ENCODE measurements at regions of chr15 and their contacts with region 1.

Region 1: GRCh38 chr15:80058851-80059785 is at the start of gene ZFAND6:
- DNase-seq: peak; percentile 98
- ATAC-seq: peak; percentile 83
- H3K4me3 Mint-ChIP-seq: peak within 1 kb of the TSS; percentile 92
- H3K27ac Mint-ChIP-seq: peak within 1 kb of the TSS; percentile 92
- H3K4me1 Mint-ChIP-seq: peaks cover 51% of the 10 kb centered on the region
- H3K27me3 Mint-ChIP-seq: no peaks in the 10 kb centered on the region
- CTCF ChIP-seq: no peak
- total RNA-seq, gene ZFAND6: 95.5 and 101 TPM in 2 replicates

Region 2: GRCh38 chr15:79923515-79924395 is 135.4 kb before region 1 on chr15:
- CTCF ChIA-PET with region 1: no interaction called
- POLR2A ChIA-PET with region 1: interaction called, 17 read pairs
- intact Hi-C with region 1: loop called (anchors 1 kb)
- DNase-seq: peak; percentile 100
- ATAC-seq: peak; percentile 94
- H3K4me3 Mint-ChIP-seq: peak overlapping the region; percentile 93
- H3K27ac Mint-ChIP-seq: peak overlapping the region; percentile 94
- H3K4me1 Mint-ChIP-seq: peaks cover 26% of the 10 kb centered on the region
- H3K27me3 Mint-ChIP-seq: no peaks in the 10 kb centered on the region
- CTCF ChIP-seq: no peak

Region 3: GRCh38 chr15:79978655-79979514 is 80.2 kb before region 1 on chr15:
- CTCF ChIA-PET with region 1: no interaction called
- POLR2A ChIA-PET with region 1: interaction called, 7 read pairs
- intact Hi-C with region 1: loop called (anchors 1 kb)
- DNase-seq: peak; percentile 28
- ATAC-seq: peak; percentile 64
- H3K4me3 Mint-ChIP-seq: peak overlapping the region; percentile 83
- H3K27ac Mint-ChIP-seq: peak overlapping the region; percentile 94
- H3K4me1 Mint-ChIP-seq: peaks cover 78% of the 10 kb centered on the region
- H3K27me3 Mint-ChIP-seq: no peaks in the 10 kb centered on the region
- CTCF ChIP-seq: no peak

Region 4: DNA sequence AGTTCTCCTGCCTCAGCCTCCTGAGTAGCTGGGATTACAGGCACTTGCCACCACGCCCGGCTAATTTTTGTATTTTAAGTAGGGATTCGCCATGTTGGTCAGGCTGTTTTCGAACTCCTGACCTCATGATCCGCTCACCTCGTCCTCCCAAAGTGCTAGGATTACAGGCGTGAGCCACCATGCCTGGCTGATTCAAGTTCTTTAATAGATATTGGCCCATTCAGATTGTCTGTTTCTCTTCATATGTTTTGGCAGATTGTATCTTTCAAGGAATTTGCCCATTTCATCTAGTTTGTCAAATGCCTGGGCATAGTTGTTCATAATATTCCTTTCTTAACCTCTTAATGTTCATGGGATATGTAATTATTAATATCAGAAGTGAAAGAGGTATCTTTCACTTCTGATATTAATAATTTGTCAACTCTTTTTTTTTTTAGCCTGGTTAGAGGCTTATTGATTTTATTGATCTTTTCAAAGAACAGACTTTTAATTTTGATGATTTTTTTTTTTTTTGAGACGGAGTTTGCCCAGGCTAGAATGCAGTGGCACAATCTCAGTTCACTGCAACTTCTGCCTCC is 39.9 kb before region 1 on chr15:
- CTCF ChIA-PET with region 1: interaction called, 3 read pairs
- POLR2A ChIA-PET with region 1: interaction called, 34 read pairs
- intact Hi-C with region 1: loop called (anchors 1 kb)
- DNase-seq: no peak
- ATAC-seq: no peak
- H3K4me3 Mint-ChIP-seq: peak overlapping the region; percentile 87
- H3K27ac Mint-ChIP-seq: peak overlapping the region; percentile 98
- H3K4me1 Mint-ChIP-seq: peaks cover 73% of the 10 kb centered on the region
- H3K27me3 Mint-ChIP-seq: no peaks in the 10 kb centered on the region
- CTCF ChIP-seq: no peak

Region 5: GRCh38 chr15:80072285-80072994 is 13.3 kb after region 1 on chr15:
- CTCF ChIA-PET with region 1: no interaction called
- POLR2A ChIA-PET with region 1: interaction called, 19 read pairs
- intact Hi-C with region 1: loop called (anchors 1 kb)
- DNase-seq: no peak
- ATAC-seq: peak; percentile 89
- H3K4me3 Mint-ChIP-seq: peak overlapping the region; percentile 69
- H3K27ac Mint-ChIP-seq: peak overlapping the region; percentile 53
- H3K4me1 Mint-ChIP-seq: peaks cover 80% of the 10 kb centered on the region
- H3K27me3 Mint-ChIP-seq: no peaks in the 10 kb centered on the region
- CTCF ChIP-seq: no peak

Region 6: DNA sequence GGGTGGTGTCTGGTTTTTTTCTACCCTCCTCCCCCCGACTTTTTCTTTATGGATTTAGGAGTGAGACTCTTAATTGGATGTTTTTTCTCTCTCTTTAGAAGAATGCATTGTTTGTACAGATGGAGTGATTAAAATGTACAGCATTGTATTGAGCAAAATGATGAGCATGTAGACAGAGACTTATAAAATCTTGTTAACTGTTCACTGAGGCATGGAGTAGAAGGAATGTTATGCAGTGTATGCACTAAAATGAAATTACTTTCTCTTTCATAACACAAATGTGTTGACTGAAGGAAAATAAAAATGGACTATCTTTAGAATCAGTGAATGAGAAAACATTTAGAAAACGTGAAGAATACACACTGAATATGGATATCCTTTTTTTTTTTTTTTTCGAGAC is 40.1 kb after region 1 on chr15:
- CTCF ChIA-PET with region 1: no interaction called
- POLR2A ChIA-PET with region 1: no interaction called
- intact Hi-C with region 1: loop called (anchors 5 kb)
- DNase-seq: no peak
- ATAC-seq: peak; percentile 57
- H3K4me3 Mint-ChIP-seq: peak overlapping the region; percentile 45
- H3K27ac Mint-ChIP-seq: peak overlapping the region; percentile 51
- H3K4me1 Mint-ChIP-seq: peaks cover 56% of the 10 kb centered on the region
- H3K27me3 Mint-ChIP-seq: no peaks in the 10 kb centered on the region
- CTCF ChIP-seq: no peak

Region 7: DNA sequence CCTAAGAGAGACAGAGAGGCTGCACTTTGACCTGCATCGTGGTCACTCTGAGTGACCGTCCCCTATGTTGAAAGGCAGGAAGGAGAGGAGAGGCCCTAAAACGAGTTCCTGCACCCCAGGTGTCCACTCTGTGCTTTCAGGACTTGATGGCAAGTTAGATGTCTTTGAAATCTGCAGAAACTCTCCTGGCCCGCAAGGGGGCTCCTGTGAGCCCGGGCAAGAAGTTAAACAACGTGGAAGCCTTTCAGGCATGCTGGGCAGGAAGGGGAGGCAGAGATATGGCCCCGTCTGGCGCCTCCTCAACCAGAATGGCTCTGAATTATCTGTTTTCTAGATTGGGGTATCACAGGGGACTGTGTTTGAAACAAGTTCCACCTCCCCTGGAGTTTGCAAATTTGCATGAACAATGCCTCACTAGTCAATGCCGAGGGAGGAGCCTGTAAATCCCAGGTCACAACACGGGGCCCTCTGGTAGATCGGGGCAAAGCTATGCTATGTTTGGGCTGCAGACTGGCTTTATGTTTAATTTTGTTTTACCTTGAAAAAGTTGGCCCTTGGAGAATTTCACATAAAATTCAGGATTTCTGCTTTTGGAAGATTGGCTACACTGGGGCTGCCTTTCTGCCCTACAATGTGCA is 183.1 kb after region 1 on chr15:
- CTCF ChIA-PET with region 1: no interaction called
- POLR2A ChIA-PET with region 1: no interaction called
- intact Hi-C with region 1: no loop called
- DNase-seq: no peak
- ATAC-seq: no peak
- H3K4me3 Mint-ChIP-seq: no peak overlapping the region
- H3K27ac Mint-ChIP-seq: no peak overlapping the region
- H3K4me1 Mint-ChIP-seq: peaks cover 2% of the 10 kb centered on the region
- H3K27me3 Mint-ChIP-seq: peaks cover 35% of the 10 kb centered on the region
- CTCF ChIP-seq: no peak

Region 8: GRCh38 chr15:81000624-81001151 is 941.6 kb after region 1 on chr15 and contains the start of gene TLNRD1:
- CTCF ChIA-PET with region 1: no interaction called
- POLR2A ChIA-PET with region 1: no interaction called
- intact Hi-C with region 1: loop called (anchors 5 kb)
- DNase-seq: peak; percentile 80
- ATAC-seq: peak; percentile 65
- H3K4me3 Mint-ChIP-seq: peak within 1 kb of the TSS; percentile 94
- H3K27ac Mint-ChIP-seq: peak within 1 kb of the TSS; percentile 96
- H3K4me1 Mint-ChIP-seq: peaks cover 47% of the 10 kb centered on the region
- H3K27me3 Mint-ChIP-seq: no peaks in the 10 kb centered on the region
- CTCF ChIP-seq: no peak
- total RNA-seq, gene TLNRD1: 25.7 TPM in 2 replicates